Mucosa of descending colon (tissue), 3 donors: ENCODE measurements at regions of chr2 and their contacts with region 1.

Region 1: GRCh38 chr2:231612179-231613053 is 19.8 kb downstream of the TEX44 start:
- DNase-seq: peak; percentile 96
- ATAC-seq: peak; percentile 70
- H3K4me3 ChIP-seq: no peak overlapping the region
- H3K4me1 ChIP-seq: peaks cover 38% of the 10 kb centered on the region
- CTCF ChIP-seq: peak; percentile 96

Region 2: DNA sequence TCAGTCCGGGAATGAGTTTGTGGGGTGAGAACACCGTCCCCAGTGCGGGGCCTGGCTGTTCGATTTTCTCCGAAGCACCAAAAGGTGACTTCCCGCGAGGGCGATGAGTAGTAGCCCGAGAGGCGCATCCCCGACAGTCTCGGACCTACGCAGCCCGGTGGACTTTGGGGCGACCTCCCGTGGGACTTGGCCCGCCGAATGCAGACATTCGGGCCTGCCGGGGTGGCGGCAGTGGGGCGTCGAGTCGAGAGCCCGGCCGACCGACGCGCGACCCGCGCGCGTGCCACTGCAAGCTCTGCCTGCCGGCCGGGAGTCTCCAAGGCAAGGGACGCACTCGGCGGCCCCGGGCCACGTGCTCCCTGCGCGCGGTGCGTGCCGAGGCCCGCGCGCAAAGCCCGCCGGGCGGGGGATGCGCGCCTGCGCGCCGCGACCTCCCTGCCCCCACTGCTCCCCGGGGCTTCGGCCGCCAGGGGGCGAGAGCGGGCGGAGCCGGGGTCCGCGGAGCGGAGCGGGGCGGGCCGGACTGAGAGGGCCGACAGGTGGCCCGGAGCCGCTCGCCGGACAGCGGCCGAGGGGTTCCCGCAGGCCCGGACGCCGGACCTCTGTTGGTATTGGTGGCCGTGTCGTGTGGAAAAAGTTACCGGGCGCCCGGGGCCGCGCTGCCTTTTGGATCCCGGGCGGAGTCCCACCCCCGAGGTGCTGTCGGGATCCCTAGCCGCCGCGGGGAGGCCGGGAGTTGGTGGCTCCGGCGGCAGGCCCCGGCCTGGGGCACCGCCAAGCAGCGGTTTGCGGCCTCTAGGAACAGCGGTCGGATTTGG is 97.8 kb after region 1 on chr2:
- intact Hi-C with region 1: loop called in 1 of 2 experiments (anchors 2 kb)
- DNase-seq: peak; percentile 86 to 96 (median 90)
- ATAC-seq: peak; percentile 42
- H3K4me3 ChIP-seq: peak overlapping the region; percentile 100
- H3K4me1 ChIP-seq: peaks cover 26% of the 10 kb centered on the region
- CTCF ChIP-seq: peak; percentile 95

Region 3: DNA sequence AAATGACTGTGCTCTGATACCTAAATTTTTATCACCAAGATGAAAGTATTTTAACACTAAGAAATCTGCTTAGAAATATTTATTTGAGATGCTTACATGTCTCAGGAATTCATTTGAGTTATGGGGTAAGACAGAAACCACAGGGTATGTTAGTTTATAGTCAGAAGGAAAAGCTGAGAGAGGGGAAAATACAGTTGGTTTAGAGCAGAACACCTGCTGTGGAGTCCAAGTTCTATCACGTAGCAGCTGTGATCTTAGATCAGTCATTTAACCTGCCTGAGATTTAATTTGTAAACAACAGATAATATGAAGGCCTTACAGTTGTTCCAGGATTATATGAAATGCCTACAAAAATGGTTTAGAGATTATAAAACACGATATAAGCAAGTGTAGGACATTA is 139.6 kb after region 1 on chr2:
- intact Hi-C with region 1: no loop called
- DNase-seq: no peak
- ATAC-seq: no peak
- H3K4me3 ChIP-seq: no peak overlapping the region
- H3K4me1 ChIP-seq: no peaks in the 10 kb centered on the region
- CTCF ChIP-seq: no peak